ENCODE measurements at regions of chr11 and their contacts with region 1.

Region 1: DNA sequence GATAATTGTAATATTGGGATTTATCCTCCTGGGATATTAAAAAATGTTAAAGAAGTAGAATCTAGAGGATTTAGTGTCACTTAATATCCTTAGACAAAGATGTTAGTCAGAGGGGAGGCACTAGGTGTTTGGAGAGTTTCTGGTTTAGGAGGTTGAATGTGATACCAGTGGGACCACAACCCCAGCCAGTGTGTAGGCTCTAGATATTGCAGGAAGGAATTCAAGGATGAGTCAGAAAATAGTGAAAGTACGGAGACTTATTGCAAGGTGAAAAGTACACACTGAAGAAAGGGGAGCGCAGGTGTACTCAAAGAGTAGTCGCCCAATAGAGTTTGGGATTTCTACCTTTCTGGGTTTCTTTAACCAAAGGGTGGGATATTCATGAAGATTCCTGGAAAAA is 5.7 kb upstream of the TMEM41B start:
- DNase-seq: no peak
- ATAC-seq: no peak
- H3K4me3 ChIP-seq: no peak overlapping the region
- H3K27ac ChIP-seq: no peak overlapping the region
- H3K4me1 ChIP-seq: peaks cover 5% of the 10 kb centered on the region
- H3K27me3 ChIP-seq: no peaks in the 10 kb centered on the region
- CTCF ChIP-seq: no peak
- POLR2A ChIP-seq: no peak

Region 2: DNA sequence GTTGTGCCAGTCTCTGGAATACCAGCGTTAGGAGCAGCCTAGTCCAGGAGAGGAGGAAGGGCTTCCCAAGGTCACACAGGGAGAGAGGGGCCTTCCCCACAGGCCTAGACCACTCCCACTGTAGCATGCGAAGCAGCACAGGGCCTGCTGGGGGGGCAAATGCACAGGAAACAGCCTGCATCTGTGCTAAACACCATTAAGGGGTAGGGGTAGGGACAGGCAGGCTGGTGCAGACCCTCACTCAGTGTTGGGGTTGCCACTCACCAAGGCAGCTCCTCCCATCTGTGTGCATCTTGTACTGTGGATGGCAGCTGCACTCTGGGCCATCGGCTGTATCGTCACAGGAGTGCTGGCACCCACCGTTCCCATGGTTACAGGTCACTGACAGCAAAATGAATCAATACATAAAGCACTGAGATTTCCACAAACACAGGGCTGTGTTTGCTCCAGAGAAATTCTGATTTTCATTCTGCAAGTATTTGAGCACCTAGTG is 253.6 kb before region 1 on chr11:
- intact Hi-C with region 1: no loop called
- DNase-seq: peak in 3 of 4 donors; percentile 30 to 47 (median 32)
- ATAC-seq: no peak
- H3K4me3 ChIP-seq: no peak overlapping the region
- H3K27ac ChIP-seq: no peak overlapping the region
- H3K4me1 ChIP-seq: peaks cover 13% of the 10 kb centered on the region
- H3K27me3 ChIP-seq: no peaks in the 10 kb centered on the region
- CTCF ChIP-seq: no peak
- POLR2A ChIP-seq: no peak

Region 3: GRCh38 chr11:9265211-9266131 is 54.6 kb before region 1 on chr11 and contains the start of gene DENND5A:
- intact Hi-C with region 1: no loop called
- DNase-seq: peak; percentile 87 to 90 (median 89)
- ATAC-seq: peak; percentile 91
- H3K4me3 ChIP-seq: peak within 1 kb of the TSS; percentile 83 to 90
- H3K27ac ChIP-seq: peak within 1 kb of the TSS; percentile 95 to 99 (median 97)
- H3K4me1 ChIP-seq: peaks cover 24% of the 10 kb centered on the region
- H3K27me3 ChIP-seq: no peaks in the 10 kb centered on the region
- CTCF ChIP-seq: no peak
- POLR2A ChIP-seq: peak; percentile 92 to 93 (median 92)
- total RNA-seq, gene DENND5A: 22.1 to 31.3 TPM

Region 4: GRCh38 chr11:9357041-9357440 is 37.0 kb after region 1 on chr11:
- intact Hi-C with region 1: loop called (anchors 5 kb)
- DNase-seq: no peak
- ATAC-seq: no peak
- H3K4me3 ChIP-seq: no peak overlapping the region
- H3K27ac ChIP-seq: no peak overlapping the region
- H3K4me1 ChIP-seq: no peaks in the 10 kb centered on the region
- H3K27me3 ChIP-seq: no peaks in the 10 kb centered on the region
- CTCF ChIP-seq: no peak
- POLR2A ChIP-seq: no peak

Measured in body of pancreas (tissue), 4 donors.